A549 (cell line): ENCODE measurements at regions of chr5 and their contacts with region 1.

Region 1: GRCh38 chr5:132410451-132411381 is 41.2 kb downstream of the SLC22A5 start:
- DNase-seq: peak; percentile 79 to 87
- ATAC-seq: peak; percentile 94 to 95
- H3K4me3 ChIP-seq: peak overlapping the region; percentile 69
- H3K27ac ChIP-seq: peak overlapping the region; percentile 96 to 98
- H3K4me1 ChIP-seq: peaks cover 33% of the 10 kb centered on the region
- CTCF ChIP-seq: peak; percentile 74
- EP300 ChIP-seq: no peak
- POLR2A ChIP-seq: peak; percentile 73
- RAD21 ChIP-seq: peak; percentile 52 to 78

Region 2: DNA sequence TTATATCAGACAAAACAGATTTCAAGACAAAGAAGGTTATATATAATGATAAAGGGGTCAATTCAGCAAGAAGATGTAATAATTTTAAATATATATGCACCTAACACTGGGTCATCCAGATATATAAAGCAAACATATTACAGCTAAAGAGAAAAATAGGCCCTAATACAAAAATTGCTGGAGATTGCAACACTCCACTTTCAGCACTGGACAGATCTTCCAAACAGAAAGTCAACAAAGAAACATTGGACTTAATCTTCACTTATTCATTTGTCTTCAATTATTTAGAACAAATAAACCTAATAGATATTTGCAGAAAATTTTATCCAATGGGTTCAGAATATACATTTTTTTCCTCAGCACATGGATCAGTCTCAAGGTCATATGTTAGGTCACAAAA is 511.0 kb before region 1 on chr5:
- CTCF ChIA-PET with region 1: no interaction called
- POLR2A ChIA-PET with region 1: no interaction called
- DNase-seq: no peak
- ATAC-seq: no peak
- H3K4me3 ChIP-seq: no peak overlapping the region
- H3K27ac ChIP-seq: no peak overlapping the region
- H3K4me1 ChIP-seq: no peaks in the 10 kb centered on the region
- CTCF ChIP-seq: no peak
- EP300 ChIP-seq: no peak
- POLR2A ChIP-seq: no peak
- RAD21 ChIP-seq: no peak

Region 3: GRCh38 chr5:132394667-132395259 is 16.0 kb before region 1 on chr5:
- CTCF ChIA-PET with region 1: interaction called, 152 read pairs
- POLR2A ChIA-PET with region 1: interaction called, 4 read pairs
- DNase-seq: no peak
- ATAC-seq: no peak
- H3K4me3 ChIP-seq: no peak overlapping the region
- H3K27ac ChIP-seq: no peak overlapping the region
- H3K4me1 ChIP-seq: peaks cover 15% of the 10 kb centered on the region
- CTCF ChIP-seq: no peak
- EP300 ChIP-seq: no peak
- POLR2A ChIP-seq: no peak
- RAD21 ChIP-seq: no peak

Region 4: DNA sequence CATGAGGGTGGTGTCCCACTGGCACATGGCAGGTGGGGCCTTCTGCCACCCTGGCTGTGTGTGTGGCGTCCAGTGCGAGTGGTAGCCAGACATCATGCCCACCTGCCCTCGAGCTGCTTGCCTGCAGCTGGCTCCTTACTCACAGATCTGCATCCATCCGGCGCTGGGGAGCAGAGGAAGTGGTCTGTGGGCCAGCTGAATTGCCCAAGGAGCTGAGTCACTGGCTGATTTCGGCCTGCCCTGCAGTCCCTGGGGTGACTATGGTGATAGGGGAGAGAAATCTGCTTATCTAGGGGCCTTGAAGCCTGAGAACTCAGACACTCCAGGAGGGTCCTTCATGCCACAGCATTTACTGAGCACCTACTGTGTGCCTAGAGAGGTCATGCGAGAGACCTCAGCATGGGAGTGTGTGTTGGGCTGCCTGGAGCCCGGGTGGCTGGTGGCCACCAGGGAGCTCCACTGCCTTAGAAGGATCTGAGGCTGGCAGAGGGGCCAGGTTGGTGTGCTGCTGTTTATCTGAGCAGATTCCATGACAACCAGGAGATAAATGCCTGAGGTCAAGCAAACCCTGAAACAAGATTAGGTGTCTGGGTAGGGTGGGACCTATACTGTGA is 15.9 kb after region 1 on chr5:
- CTCF ChIA-PET with region 1: interaction called, 11 read pairs
- POLR2A ChIA-PET with region 1: interaction called, 3 read pairs
- DNase-seq: peak; percentile 46 to 65
- ATAC-seq: peak; percentile 66 to 80
- H3K4me3 ChIP-seq: no peak overlapping the region
- H3K27ac ChIP-seq: peak overlapping the region; percentile 67 to 84
- H3K4me1 ChIP-seq: peaks cover 60% of the 10 kb centered on the region
- CTCF ChIP-seq: peak; percentile 20; the same call in 2 of the 3 replicates
- EP300 ChIP-seq: no peak
- POLR2A ChIP-seq: no peak
- RAD21 ChIP-seq: peak in 1 of 2 experiments; percentile 17; a peak in 1 of 5 replicates

Region 5: DNA sequence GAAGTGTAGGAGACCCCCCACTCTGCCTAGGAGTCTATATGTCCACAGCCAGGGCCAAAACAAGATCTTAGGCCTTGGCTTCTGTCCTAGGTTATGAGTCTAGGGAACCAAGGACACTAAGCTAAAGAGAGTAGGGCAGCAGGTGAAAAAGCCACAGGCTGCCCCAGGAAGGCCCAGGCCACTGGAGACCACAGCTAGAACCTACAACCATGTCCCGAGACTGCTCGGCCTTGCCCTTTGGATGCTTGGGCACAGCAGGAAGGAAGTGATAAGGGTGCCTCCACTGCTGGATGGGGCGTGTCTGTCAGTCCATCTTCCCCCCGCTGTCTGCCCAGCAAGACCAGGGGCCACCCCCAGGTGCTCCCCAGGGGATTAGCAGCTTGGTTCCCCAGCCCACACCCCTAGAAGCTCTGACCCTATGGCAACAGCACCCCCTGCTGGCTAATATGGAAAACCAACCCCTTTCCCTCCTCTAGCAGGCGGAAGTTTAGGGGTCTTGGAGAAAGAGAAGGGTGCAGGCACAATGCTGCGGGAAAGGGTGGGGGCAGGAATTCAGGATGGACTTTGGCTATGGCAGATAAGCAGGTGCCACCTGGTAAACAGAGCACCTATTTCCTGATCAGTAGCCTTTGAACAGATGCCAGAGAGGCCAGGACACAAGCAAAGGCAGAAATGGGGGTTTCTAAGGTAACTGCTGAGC is 90.4 kb after region 1 on chr5:
- CTCF ChIA-PET with region 1: interaction called, 41 read pairs
- POLR2A ChIA-PET with region 1: interaction called, 20 read pairs
- DNase-seq: peak; percentile 51 to 71
- ATAC-seq: peak in 1 of 2 experiments; percentile 29; a peak in 3 of 6 replicates
- H3K4me3 ChIP-seq: no peak overlapping the region
- H3K27ac ChIP-seq: peak overlapping the region; percentile 37 to 97; a peak in 4 of 6 replicates
- H3K4me1 ChIP-seq: peaks cover 41% of the 10 kb centered on the region
- CTCF ChIP-seq: peak; percentile 89
- EP300 ChIP-seq: no peak
- POLR2A ChIP-seq: no peak
- RAD21 ChIP-seq: peak; percentile 94 to 96